ENCODE measurements at regions of chr3 and their contacts with region 1.

Region 1: DNA sequence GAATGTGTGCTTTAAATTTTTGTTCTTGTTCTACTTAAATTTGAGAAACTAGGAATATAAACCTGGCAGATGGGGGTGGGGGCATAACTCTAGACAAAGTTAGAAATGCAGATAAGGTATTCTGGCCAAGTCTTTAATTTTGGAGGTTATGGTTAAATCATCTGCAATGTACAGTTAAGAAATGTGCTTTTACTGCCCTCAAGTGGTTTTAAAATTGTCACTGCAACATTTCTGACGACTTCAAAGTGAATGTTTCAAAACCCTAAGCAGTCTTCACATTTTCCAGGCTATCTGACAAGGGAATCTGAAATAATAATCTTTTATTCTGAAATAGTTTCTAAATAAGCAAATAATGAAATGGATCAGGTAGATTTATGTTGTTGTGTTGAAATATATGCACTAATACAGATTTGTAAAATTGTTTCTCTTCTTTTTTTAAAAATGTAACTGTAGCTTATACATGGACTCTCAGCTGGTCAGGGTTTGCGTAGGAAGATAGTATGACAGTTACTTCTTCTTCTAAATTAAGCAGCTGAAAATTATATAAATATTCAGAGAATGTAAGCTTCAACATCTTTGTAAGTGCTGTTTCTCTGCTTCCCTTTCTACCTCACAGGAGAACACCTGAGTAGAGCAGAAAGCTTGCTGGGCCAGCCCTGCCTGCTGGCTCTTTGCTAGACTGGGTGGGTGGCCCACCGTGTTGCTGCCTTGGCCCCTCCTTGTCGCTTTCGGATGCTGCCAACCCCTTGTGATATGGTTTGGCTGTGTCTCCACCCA is 45.0 kb downstream of the SUCNR1 start:
- DNase-seq: peak; percentile 26 to 57 (median 43)
- H3K4me3 ChIP-seq: no peak overlapping the region
- H3K4me3 Mint-ChIP-seq: no peak overlapping the region
- H3K27ac ChIP-seq: no peak overlapping the region
- H3K27ac Mint-ChIP-seq: no peak overlapping the region
- H3K4me1 ChIP-seq: no peaks in the 10 kb centered on the region
- H3K4me1 Mint-ChIP-seq: no peaks in the 10 kb centered on the region
- H3K27me3 ChIP-seq: no peaks in the 10 kb centered on the region
- H3K27me3 Mint-ChIP-seq: no peaks in the 10 kb centered on the region
- CTCF ChIP-seq: peak; percentile 84

Region 2: DNA sequence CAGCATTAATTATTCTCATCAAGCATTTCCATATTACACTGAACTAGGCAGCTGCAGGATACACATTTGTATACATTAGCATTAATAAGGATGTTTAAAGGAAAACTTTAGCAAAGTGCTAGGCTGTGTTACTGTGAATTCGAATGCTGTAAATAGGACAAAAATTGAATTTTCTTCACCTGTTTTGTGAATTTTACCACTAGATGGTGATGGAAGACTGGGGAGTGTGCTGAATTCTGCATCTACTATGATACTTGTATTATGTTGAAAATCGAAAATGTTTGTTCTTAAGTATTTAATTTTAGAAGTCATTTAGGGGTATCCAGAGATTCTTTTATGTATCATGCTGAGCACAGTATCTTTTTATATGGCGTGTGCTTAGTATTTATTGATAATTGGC is 627.8 kb before region 1 on chr3:
- intact Hi-C with region 1: loop called in 1 of 2 experiments (anchors 10 kb)
- DNase-seq: peak; percentile 38 to 54 (median 41)
- H3K4me3 ChIP-seq: no peak overlapping the region
- H3K4me3 Mint-ChIP-seq: no peak overlapping the region
- H3K27ac ChIP-seq: no peak overlapping the region
- H3K27ac Mint-ChIP-seq: no peak overlapping the region
- H3K4me1 ChIP-seq: no peaks in the 10 kb centered on the region
- H3K4me1 Mint-ChIP-seq: no peaks in the 10 kb centered on the region
- H3K27me3 ChIP-seq: no peaks in the 10 kb centered on the region
- H3K27me3 Mint-ChIP-seq: no peaks in the 10 kb centered on the region
- CTCF ChIP-seq: peak; percentile 82

Region 3: DNA sequence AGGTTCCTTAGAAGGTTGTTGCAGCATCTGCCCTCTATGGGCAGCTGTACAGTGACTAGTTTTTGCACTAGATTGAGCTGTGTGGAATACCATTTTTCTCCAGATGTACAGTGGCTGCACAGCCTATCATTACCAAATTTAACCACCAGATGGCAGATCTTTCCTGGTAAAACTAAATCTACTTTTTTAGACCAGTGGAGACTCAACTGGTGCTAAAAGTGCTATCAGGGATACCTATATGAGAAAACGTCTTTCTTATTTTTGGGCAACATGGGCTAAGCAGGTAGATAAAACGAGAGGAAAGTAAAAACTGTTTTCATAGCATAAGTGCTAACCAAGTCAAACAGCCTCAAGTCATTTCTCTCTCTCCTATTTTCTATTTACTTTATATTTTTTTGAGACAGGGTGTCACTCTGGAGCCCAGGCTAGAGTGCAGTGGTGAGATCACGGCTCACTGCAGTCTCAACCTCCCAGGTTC is 478.8 kb before region 1 on chr3:
- intact Hi-C with region 1: loop called in 1 of 2 experiments (anchors 10 kb)
- DNase-seq: peak; percentile 37 to 60 (median 41)
- H3K4me3 ChIP-seq: no peak overlapping the region
- H3K4me3 Mint-ChIP-seq: no peak overlapping the region
- H3K27ac ChIP-seq: no peak overlapping the region
- H3K27ac Mint-ChIP-seq: no peak overlapping the region
- H3K4me1 ChIP-seq: peaks cover under 1 to 2% of the 10 kb centered on the region in 2 donors
- H3K4me1 Mint-ChIP-seq: peaks cover under 1% of the 10 kb centered on the region
- H3K27me3 ChIP-seq: no peaks in the 10 kb centered on the region
- H3K27me3 Mint-ChIP-seq: no peaks in the 10 kb centered on the region
- CTCF ChIP-seq: peak; percentile 85